ENCODE measurements at regions of chr5 and their contacts with region 1.

Region 1: GRCh38 chr5:163408311-163408923 is 29.0 kb upstream of the CCNG1 start:
- DNase-seq: peak; percentile 66
- H3K4me3 Mint-ChIP-seq: no peak overlapping the region
- H3K27ac Mint-ChIP-seq: no peak overlapping the region
- H3K4me1 Mint-ChIP-seq: peaks cover 2% of the 10 kb centered on the region
- H3K27me3 Mint-ChIP-seq: peaks cover 4% of the 10 kb centered on the region

Region 2: GRCh38 chr5:161544350-161544765 is 1864.1 kb before region 1 on chr5:
- CTCF ChIA-PET with region 1: no interaction called
- POLR2A ChIA-PET with region 1: no interaction called
- intact Hi-C with region 1: loop called (anchors 5 kb)
- DNase-seq: peak; percentile 40
- H3K4me3 Mint-ChIP-seq: no peak overlapping the region
- H3K27ac Mint-ChIP-seq: no peak overlapping the region
- H3K4me1 Mint-ChIP-seq: peaks cover 15% of the 10 kb centered on the region
- H3K27me3 Mint-ChIP-seq: peaks cover 44% of the 10 kb centered on the region

Region 3: DNA sequence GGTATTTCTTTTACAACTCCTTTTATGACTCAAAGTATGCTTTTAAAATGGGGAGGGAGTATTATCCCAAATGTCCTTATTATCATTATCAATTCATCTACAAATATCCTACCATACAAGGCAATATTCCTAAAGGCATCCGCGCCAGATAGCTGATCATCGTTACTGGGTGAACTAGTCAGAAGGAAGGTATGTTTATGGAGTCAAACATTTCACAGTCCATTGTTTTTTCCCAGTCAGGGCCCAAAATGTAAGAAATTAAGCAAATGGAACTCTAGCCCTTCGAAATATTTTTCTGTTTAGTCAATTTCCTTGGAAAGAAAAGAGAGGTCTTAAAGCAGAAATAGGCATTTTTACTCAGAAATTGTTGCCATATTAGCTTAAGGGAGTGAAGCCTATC is 159.5 kb before region 1 on chr5:
- CTCF ChIA-PET with region 1: no interaction called
- POLR2A ChIA-PET with region 1: no interaction called
- intact Hi-C with region 1: no loop called
- DNase-seq: no peak
- H3K4me3 Mint-ChIP-seq: no peak overlapping the region
- H3K27ac Mint-ChIP-seq: no peak overlapping the region
- H3K4me1 Mint-ChIP-seq: no peaks in the 10 kb centered on the region
- H3K27me3 Mint-ChIP-seq: no peaks in the 10 kb centered on the region

Region 4: DNA sequence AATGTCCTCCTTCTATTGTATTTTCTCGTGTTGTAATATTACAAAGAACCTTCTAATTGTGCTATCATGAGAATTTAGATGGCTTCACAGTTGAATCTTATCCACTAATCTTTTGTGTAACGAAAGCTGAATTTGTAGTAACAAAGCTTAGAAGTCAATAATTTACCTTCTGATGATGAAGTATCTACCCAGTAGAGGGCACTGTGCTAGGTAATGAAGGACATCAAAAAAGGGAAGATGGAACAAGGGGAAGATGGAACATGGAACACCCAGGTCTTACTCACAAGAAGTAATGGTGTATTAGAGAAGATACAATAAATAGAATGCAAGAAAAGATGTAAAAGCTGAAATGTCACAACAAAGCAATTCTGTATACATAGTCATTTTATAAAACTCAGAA is 102.0 kb before region 1 on chr5:
- CTCF ChIA-PET with region 1: interaction called, 28 read pairs
- POLR2A ChIA-PET with region 1: no interaction called
- intact Hi-C with region 1: loop called (anchors 5 kb)
- DNase-seq: no peak
- H3K4me3 Mint-ChIP-seq: no peak overlapping the region
- H3K27ac Mint-ChIP-seq: no peak overlapping the region
- H3K4me1 Mint-ChIP-seq: peaks cover 5% of the 10 kb centered on the region
- H3K27me3 Mint-ChIP-seq: no peaks in the 10 kb centered on the region

Region 5: GRCh38 chr5:163397354-163397753 is 11.1 kb before region 1 on chr5:
- CTCF ChIA-PET with region 1: interaction called, 18 read pairs
- POLR2A ChIA-PET with region 1: no interaction called
- intact Hi-C with region 1: no loop called
- DNase-seq: no peak
- H3K4me3 Mint-ChIP-seq: no peak overlapping the region
- H3K27ac Mint-ChIP-seq: no peak overlapping the region
- H3K4me1 Mint-ChIP-seq: no peaks in the 10 kb centered on the region
- H3K27me3 Mint-ChIP-seq: peaks cover 17% of the 10 kb centered on the region

Region 6: DNA sequence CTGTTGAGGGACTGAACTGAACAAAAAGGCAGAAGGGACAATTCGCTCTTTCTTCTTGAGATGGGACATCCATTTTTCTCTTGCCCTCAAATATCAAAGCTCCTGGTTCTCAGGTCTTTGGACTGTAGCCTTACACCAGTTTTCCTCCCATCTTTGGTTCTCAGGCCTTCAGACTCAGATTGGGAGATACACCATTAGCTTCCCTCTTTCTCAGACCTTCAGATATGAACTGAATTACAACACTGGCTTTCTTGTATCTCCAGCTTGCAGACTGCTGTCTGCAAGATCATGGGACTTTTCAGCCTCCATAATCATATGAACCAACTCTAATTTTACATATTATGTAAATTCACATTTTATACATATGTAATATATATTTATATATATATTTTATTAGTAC is 16.4 kb after region 1 on chr5:
- CTCF ChIA-PET with region 1: interaction called, 13 read pairs
- POLR2A ChIA-PET with region 1: no interaction called
- intact Hi-C with region 1: no loop called
- DNase-seq: no peak
- H3K4me3 Mint-ChIP-seq: no peak overlapping the region
- H3K27ac Mint-ChIP-seq: no peak overlapping the region
- H3K4me1 Mint-ChIP-seq: peaks cover 5% of the 10 kb centered on the region
- H3K27me3 Mint-ChIP-seq: peaks cover 6% of the 10 kb centered on the region

Region 7: GRCh38 chr5:163727028-163727427 is 318.6 kb after region 1 on chr5:
- CTCF ChIA-PET with region 1: no interaction called
- POLR2A ChIA-PET with region 1: no interaction called
- intact Hi-C with region 1: no loop called
- DNase-seq: no peak
- H3K4me3 Mint-ChIP-seq: no peak overlapping the region
- H3K27ac Mint-ChIP-seq: no peak overlapping the region
- H3K4me1 Mint-ChIP-seq: no peaks in the 10 kb centered on the region
- H3K27me3 Mint-ChIP-seq: no peaks in the 10 kb centered on the region

Measured in activated CD4-positive, alpha-beta memory T cell treated with anti-CD3 and anti-CD28 coated beads for 36 hours (primary cell).